MCF 10A (cell line): ENCODE measurements at regions of chr11 and their contacts with region 1.

Region 1: GRCh38 chr11:10878408-10879214 is 20.8 kb upstream of the ZBED5 start:
- DNase-seq: peak; percentile 73
- H3K4me3 Mint-ChIP-seq: no peak overlapping the region
- H3K27ac Mint-ChIP-seq: no peak overlapping the region
- H3K4me1 Mint-ChIP-seq: peaks cover 26% of the 10 kb centered on the region
- H3K27me3 Mint-ChIP-seq: no peaks in the 10 kb centered on the region
- CTCF ChIP-seq: peak; percentile 57

Region 2: DNA sequence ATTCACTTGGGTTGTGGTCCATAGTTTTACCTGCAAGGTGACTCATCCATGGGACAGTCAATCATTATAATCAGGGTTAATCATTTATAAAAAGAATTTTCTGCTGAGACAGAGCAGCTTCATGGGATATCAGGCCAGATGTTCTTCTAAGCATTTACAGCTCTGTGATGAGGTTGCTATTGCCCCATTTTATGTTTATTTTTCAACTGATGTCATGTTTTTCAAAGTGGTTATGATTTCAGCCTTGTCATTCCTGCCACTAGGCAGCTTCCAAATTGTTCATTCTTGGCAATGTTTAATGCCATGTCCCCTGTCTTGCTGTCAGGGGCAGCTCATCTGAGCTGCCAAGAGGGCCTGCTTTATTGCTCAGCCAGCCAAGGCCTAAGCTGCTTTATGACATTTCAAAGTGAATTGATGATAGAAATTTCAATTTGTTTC is 15.1 kb after region 1 on chr11:
- CTCF ChIA-PET with region 1: interaction called, 10 read pairs
- POLR2A ChIA-PET with region 1: interaction called, 43 read pairs
- intact Hi-C with region 1: no loop called
- DNase-seq: peak; percentile 24
- H3K4me3 Mint-ChIP-seq: no peak overlapping the region
- H3K27ac Mint-ChIP-seq: peak overlapping the region; percentile 25
- H3K4me1 Mint-ChIP-seq: peaks cover 30% of the 10 kb centered on the region
- H3K27me3 Mint-ChIP-seq: no peaks in the 10 kb centered on the region
- CTCF ChIP-seq: no peak

Region 3: GRCh38 chr11:10920205-10920604 is 41.6 kb after region 1 on chr11:
- CTCF ChIA-PET with region 1: no interaction called
- POLR2A ChIA-PET with region 1: no interaction called
- intact Hi-C with region 1: no loop called
- DNase-seq: no peak
- H3K4me3 Mint-ChIP-seq: no peak overlapping the region
- H3K27ac Mint-ChIP-seq: no peak overlapping the region
- H3K4me1 Mint-ChIP-seq: peaks cover 5% of the 10 kb centered on the region
- H3K27me3 Mint-ChIP-seq: no peaks in the 10 kb centered on the region
- CTCF ChIP-seq: no peak

Region 4: DNA sequence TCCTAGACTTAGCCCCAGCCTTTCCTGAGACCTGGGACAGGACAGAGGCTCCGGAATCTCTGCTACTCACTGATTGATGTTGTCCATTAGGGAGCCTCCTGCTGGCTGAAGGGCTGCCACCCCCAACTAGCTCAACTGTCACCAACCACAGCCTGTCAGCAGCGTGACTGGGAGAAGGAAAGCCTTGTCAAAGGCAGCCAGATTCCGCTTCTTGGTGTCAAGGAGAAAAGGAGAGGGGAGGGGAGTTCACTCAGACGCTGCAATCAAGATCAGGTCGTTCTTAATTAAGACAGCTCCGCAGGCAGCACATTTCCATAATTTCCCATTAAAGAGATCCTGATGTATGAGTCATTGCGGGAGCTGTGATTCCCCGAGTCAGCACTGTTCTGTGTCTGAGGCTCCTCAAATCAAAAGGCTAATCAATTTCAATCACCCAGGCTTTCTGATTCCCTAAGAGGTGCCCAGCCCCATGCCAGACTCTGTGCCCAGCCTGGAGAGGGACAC is 132.1 kb after region 1 on chr11:
- CTCF ChIA-PET with region 1: no interaction called
- POLR2A ChIA-PET with region 1: no interaction called
- intact Hi-C with region 1: no loop called
- DNase-seq: peak; percentile 51
- H3K4me3 Mint-ChIP-seq: no peak overlapping the region
- H3K27ac Mint-ChIP-seq: no peak overlapping the region
- H3K4me1 Mint-ChIP-seq: peaks cover 7% of the 10 kb centered on the region
- H3K27me3 Mint-ChIP-seq: peaks cover 21% of the 10 kb centered on the region
- CTCF ChIP-seq: no peak